Transverse colon (tissue), 4 donors: ENCODE measurements at regions of chr6 and their contacts with region 1.

Region 1: GRCh38 chr6:142716097-142716496 is 228.9 kb downstream of the HIVEP2 start:
- DNase-seq: no peak
- H3K4me3 ChIP-seq: no peak overlapping the region
- H3K27ac ChIP-seq: no peak overlapping the region
- H3K4me1 ChIP-seq: no peaks in the 10 kb centered on the region
- H3K27me3 ChIP-seq: no peaks in the 10 kb centered on the region
- CTCF ChIP-seq: no peak
- EP300 ChIP-seq: no peak
- POLR2A ChIP-seq: no peak

Region 2: GRCh38 chr6:142763205-142763604 is 47.1 kb after region 1 on chr6:
- in situ Hi-C with region 1: no loop called
- intact Hi-C with region 1: no loop called
- DNase-seq: no peak
- H3K4me3 ChIP-seq: no peak overlapping the region
- H3K27ac ChIP-seq: no peak overlapping the region
- H3K4me1 ChIP-seq: no peaks in the 10 kb centered on the region
- H3K27me3 ChIP-seq: no peaks in the 10 kb centered on the region
- CTCF ChIP-seq: no peak
- EP300 ChIP-seq: no peak
- POLR2A ChIP-seq: no peak

Region 3: DNA sequence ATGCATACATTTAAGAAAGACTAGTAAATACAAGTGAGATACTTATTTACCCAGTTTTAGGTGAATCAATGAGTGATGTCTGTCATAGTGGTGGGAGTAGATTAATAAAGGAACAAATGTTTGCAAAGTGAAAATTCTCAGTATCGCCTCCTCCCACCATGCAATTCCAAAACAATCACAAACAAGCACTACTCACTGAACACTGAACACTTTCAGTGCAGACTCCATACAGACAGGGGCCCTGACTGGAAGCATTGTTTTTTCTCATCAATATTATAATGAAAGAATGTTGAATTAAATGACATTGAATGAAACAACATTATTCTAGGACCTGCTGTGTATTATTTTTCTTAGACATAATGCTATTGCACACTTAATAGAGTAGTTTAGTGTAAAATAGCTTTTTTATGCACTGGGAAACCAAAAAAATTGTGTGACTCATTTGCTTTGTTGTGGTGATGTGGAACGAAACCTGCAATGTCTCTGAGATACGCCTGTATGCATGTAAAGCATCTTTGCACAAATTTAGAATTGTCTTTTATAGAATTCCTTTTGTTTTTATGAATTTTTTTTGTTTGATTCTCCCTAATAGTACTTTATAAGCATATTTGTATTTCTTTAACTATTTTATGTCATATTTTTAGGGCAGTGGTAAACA is 1886.6 kb after region 1 on chr6:
- in situ Hi-C with region 1: no loop called
- intact Hi-C with region 1: loop called (anchors 5 kb)
- DNase-seq: no peak
- H3K4me3 ChIP-seq: no peak overlapping the region
- H3K27ac ChIP-seq: no peak overlapping the region
- H3K4me1 ChIP-seq: no peaks in the 10 kb centered on the region
- H3K27me3 ChIP-seq: no peaks in the 10 kb centered on the region
- CTCF ChIP-seq: no peak
- EP300 ChIP-seq: no peak
- POLR2A ChIP-seq: no peak